ENCODE measurements at regions of chr15 and their contacts with region 1.

Region 1: DNA sequence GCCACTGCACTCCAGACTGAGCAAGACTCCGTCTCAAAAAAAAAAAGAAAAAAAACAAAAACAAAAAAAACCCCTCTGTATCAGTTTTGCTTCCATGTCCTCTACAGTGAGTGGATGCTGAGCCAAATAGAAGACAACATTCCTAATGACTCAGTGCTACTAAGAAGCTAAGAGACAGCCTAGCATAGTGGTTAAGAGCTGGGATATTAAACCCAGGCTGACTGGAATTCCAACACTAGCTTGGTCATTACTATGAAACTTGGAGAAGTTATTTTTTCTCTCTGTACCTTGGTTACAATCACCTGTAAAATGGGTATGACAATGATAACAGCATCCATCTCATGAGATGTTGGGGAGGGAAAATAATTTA is 60.9 kb upstream of the PYGO1 start:
- DNase-seq: no peak
- H3K4me3 ChIP-seq: no peak overlapping the region
- H3K27ac ChIP-seq: no peak overlapping the region
- H3K4me1 ChIP-seq: no peaks in the 10 kb centered on the region
- H3K27me3 ChIP-seq: no peaks in the 10 kb centered on the region
- CTCF ChIP-seq: no peak
- EP300 ChIP-seq: no peak
- RAD21 ChIP-seq: no peak

Region 2: GRCh38 chr15:55526559-55527036 is 122.4 kb before region 1 on chr15:
- CTCF ChIA-PET with region 1: interaction called, 13 read pairs
- POLR2A ChIA-PET with region 1: no interaction called
- DNase-seq: peak; percentile 51
- H3K4me3 ChIP-seq: no peak overlapping the region
- H3K27ac ChIP-seq: no peak overlapping the region
- H3K4me1 ChIP-seq: peaks cover 0 to 5% of the 10 kb centered on the region in 2 experiments; a peak in 1 of 4 replicates
- H3K27me3 ChIP-seq: no peaks in the 10 kb centered on the region
- CTCF ChIP-seq: peak; percentile 68
- EP300 ChIP-seq: no peak
- RAD21 ChIP-seq: peak; percentile 69

Region 3: DNA sequence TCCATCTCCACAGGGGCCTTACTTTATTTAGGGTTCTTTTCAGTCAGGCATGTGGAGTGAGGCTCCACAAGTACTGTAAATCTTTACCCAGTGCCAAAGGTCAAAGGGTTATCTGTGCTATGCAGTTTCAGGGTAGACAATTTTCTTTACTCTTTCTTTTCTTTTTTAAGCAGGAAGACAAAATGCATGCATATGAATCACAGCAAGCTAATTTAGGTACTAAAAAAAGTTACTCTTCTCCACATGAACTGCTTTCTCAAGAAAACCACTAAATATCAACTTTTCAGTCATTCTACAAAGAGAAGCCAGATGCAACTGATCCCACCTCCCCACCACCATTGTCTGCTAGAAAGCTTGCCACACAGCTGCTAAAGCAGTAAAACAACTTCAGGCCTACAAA is 12.4 kb after region 1 on chr15:
- CTCF ChIA-PET with region 1: interaction called, 31 read pairs
- POLR2A ChIA-PET with region 1: no interaction called
- DNase-seq: no peak
- H3K4me3 ChIP-seq: no peak overlapping the region
- H3K27ac ChIP-seq: peak overlapping the region in 1 of 2 experiments; percentile 29; a peak in 1 of 4 replicates
- H3K4me1 ChIP-seq: peaks cover 0 to 3% of the 10 kb centered on the region in 2 experiments; a peak in 2 of 4 replicates
- H3K27me3 ChIP-seq: no peaks in the 10 kb centered on the region
- CTCF ChIP-seq: no peak
- EP300 ChIP-seq: no peak
- RAD21 ChIP-seq: no peak

Region 4: DNA sequence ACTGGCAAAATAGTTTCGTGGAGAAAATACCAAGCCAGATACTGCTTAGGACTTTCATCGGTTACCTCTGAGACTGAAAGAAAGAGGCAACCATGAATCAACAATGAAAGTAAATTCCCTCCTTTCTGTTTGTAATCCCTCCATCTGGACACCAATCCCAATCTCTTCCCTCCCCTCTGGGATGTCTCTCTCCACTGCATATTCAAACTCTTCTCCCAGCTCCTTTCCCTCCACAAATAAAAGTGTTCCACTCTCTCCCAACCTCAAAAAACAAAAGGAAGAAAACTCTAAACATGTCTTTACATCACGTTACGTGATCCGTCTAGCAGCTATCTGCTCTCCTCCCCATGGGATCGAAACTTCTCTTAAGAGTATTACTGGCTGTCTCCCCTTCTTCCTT is 38.8 kb after region 1 on chr15:
- CTCF ChIA-PET with region 1: interaction called, 12 read pairs
- POLR2A ChIA-PET with region 1: no interaction called
- DNase-seq: no peak
- H3K4me3 ChIP-seq: no peak overlapping the region
- H3K27ac ChIP-seq: no peak overlapping the region
- H3K4me1 ChIP-seq: peaks cover 0 to 13% of the 10 kb centered on the region in 2 experiments; a peak in 3 of 4 replicates
- H3K27me3 ChIP-seq: no peaks in the 10 kb centered on the region
- CTCF ChIP-seq: no peak
- EP300 ChIP-seq: no peak
- RAD21 ChIP-seq: no peak

Region 5: DNA sequence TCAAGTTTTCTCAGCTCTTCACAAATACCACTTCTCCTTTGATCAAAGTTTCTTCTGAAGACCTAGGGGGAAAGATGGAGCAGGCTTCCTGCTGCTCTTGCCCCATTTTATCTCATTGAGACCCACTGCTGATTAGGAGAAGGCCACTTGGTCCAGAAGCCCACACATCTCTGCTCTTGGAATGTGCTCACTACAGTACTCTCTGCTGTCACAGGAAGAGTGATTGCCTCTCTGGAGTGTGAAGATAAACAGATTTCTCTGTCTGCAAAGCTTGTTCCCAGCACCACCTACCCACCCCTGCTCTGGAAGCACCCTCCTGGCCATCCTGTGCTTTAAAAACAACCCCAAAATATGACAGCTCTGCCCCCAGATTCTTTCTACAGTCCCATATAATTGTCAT is 135.2 kb after region 1 on chr15:
- CTCF ChIA-PET with region 1: interaction called, 14 read pairs
- POLR2A ChIA-PET with region 1: no interaction called
- DNase-seq: no peak
- H3K4me3 ChIP-seq: no peak overlapping the region
- H3K27ac ChIP-seq: peak overlapping the region in 1 of 2 experiments; percentile 85; a peak in 2 of 4 replicates
- H3K4me1 ChIP-seq: peaks cover 0 to 23% of the 10 kb centered on the region in 2 experiments; a peak in 2 of 4 replicates
- H3K27me3 ChIP-seq: no peaks in the 10 kb centered on the region
- CTCF ChIP-seq: no peak
- EP300 ChIP-seq: peak in 1 of 2 experiments; percentile 26; a peak in 1 of 4 replicates
- RAD21 ChIP-seq: no peak

Region 6: GRCh38 chr15:55799291-55800212 is 150.5 kb after region 1 on chr15:
- CTCF ChIA-PET with region 1: interaction called, 158 read pairs
- POLR2A ChIA-PET with region 1: interaction called, 7 read pairs
- DNase-seq: peak; percentile 73
- H3K4me3 ChIP-seq: no peak overlapping the region; a peak in 1 of 4 replicates
- H3K27ac ChIP-seq: peak overlapping the region in 1 of 2 experiments; percentile 78; a peak in 2 of 4 replicates
- H3K4me1 ChIP-seq: peaks cover 0 to 27% of the 10 kb centered on the region in 2 experiments; a peak in 2 of 4 replicates
- H3K27me3 ChIP-seq: no peaks in the 10 kb centered on the region
- CTCF ChIP-seq: peak; percentile 80
- EP300 ChIP-seq: peak in 1 of 2 experiments; percentile 13; a peak in 1 of 4 replicates
- RAD21 ChIP-seq: peak; percentile 98

Region 7: GRCh38 chr15:55846116-55846707 is 197.2 kb after region 1 on chr15:
- CTCF ChIA-PET with region 1: interaction called, 22 read pairs
- POLR2A ChIA-PET with region 1: no interaction called
- DNase-seq: peak; percentile 65
- H3K4me3 ChIP-seq: no peak overlapping the region; a peak in 1 of 4 replicates
- H3K27ac ChIP-seq: peak overlapping the region in 1 of 2 experiments; percentile 29; a peak in 1 of 4 replicates
- H3K4me1 ChIP-seq: peaks cover 0 to 6% of the 10 kb centered on the region in 2 experiments; a peak in 2 of 4 replicates
- H3K27me3 ChIP-seq: no peaks in the 10 kb centered on the region
- CTCF ChIP-seq: peak; percentile 96
- EP300 ChIP-seq: no peak
- RAD21 ChIP-seq: peak; percentile 89

Region 8: DNA sequence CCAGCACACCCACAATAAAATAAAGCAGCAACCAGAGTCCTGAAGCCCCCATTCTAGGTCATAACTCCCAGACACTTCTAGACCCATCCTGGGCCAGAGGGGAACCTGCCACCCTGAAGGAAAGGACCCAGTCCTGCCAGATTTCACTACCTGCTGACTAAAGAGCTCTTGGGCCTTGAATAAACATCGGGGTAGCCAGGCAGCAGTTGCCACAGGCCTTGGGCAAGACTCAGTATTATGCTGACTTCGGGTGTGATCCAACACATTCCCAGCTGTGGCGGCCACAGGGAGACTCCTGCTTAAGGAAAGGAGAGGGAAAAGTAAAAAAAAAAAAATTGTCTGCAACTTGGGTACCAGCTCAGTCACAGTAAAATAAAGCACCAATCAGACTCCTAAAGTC is 320.5 kb after region 1 on chr15:
- CTCF ChIA-PET with region 1: no interaction called
- POLR2A ChIA-PET with region 1: no interaction called
- DNase-seq: no peak
- H3K4me3 ChIP-seq: no peak overlapping the region
- H3K27ac ChIP-seq: no peak overlapping the region
- H3K4me1 ChIP-seq: no peaks in the 10 kb centered on the region
- H3K27me3 ChIP-seq: no peaks in the 10 kb centered on the region
- CTCF ChIP-seq: no peak
- EP300 ChIP-seq: no peak
- RAD21 ChIP-seq: no peak